Right cardiac atrium (tissue), 5 donors: ENCODE measurements at regions of chr5 and their contacts with region 1.

Region 1: GRCh38 chr5:127492854-127493738 is 24.3 kb upstream of the PRRC1 start:
- DNase-seq: no peak
- ATAC-seq: peak in 1 of 2 donors; percentile 36
- H3K4me3 ChIP-seq: no peak overlapping the region
- H3K27ac ChIP-seq: no peak overlapping the region
- H3K4me1 ChIP-seq: no peaks in the 10 kb centered on the region
- H3K27me3 ChIP-seq: no peaks in the 10 kb centered on the region

Region 2: DNA sequence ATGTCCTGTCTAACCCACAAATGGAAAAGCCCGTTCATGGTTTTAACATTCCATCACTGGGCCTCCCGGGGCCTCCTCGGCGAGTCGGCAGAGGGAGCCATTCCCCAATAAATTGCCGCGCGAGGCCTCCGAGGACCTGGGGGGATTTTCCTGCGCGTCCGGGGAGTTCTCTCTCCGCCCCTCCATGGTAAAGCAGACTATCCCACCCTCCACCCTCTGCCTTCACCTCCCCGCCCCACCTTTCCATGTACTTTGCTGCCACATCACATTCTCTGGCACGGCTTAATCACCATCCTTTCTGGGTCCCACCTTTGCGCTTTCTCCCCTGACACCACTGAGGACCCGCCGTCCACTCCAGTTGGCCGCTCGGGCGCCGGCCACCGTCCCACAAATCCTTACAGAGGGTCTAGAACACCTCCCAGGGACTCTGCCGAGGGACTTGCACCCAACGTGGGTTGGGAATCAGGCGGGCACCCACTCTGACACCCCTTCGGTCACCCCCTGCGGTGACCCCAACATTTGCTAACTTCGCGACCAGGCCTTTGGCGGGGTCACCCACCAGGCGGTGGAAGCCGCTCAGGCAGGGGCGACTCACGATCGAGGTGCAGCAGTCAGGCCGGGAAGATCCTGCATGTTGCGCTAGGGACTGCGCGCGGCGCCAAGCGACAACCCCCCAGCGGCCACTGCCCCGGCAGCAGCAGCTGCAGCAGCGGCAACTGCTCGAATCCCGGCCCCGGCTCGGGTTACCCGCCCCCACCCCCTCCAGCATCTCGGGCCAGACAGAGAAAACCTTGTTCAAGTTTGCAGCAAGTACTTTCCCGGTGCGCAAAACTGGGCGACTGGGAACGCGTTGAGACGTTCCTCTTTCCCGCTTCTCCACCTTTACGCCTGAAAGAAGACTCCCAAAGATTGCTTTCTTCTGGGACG is 202.8 kb before region 1 on chr5 and contains the start of gene MEGF10:
- intact Hi-C with region 1: loop called in 3 of 4 experiments (anchors 5 to 10 kb)
- DNase-seq: peak; percentile 29 to 79 (median 73)
- ATAC-seq: peak; percentile 79 to 87
- H3K4me3 ChIP-seq: peak within 1 kb of the TSS; percentile 2
- H3K27ac ChIP-seq: no peak within 1 kb of the TSS
- H3K4me1 ChIP-seq: no peaks in the 10 kb centered on the region
- H3K27me3 ChIP-seq: no peaks in the 10 kb centered on the region
- total RNA-seq, gene MEGF10: 0.47 to 2.7 (median 1.4) TPM

Region 3: DNA sequence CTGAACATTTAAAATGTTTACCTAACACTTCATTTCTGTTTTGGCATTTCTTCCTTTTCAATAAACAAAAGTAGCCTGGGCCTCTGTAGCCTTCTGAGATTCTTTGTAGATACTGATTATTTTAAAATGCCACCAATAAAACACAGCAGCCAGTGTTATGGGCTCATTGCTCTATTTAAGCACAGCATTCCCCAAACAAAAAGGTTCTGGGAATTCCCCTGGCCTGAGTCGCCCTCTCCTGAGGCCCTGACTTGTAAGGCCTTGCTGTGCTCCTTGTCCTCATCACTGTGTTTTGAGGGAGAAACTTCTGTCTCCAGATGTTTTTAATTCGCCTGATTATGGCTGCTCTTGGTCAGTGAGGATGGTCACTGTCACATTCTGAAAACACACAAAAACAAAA is 122.8 kb after region 1 on chr5:
- intact Hi-C with region 1: no loop called
- DNase-seq: no peak
- ATAC-seq: no peak
- H3K4me3 ChIP-seq: no peak overlapping the region
- H3K27ac ChIP-seq: no peak overlapping the region
- H3K4me1 ChIP-seq: no peaks in the 10 kb centered on the region
- H3K27me3 ChIP-seq: no peaks in the 10 kb centered on the region